Activated CD4-positive, alpha-beta T cell treated with anti-CD3 and anti-CD28 coated beads for 36 hours (primary cell): ENCODE measurements at regions of chr2 and their contacts with region 1.

Region 1: GRCh38 chr2:61176755-61177726 is 15.1 kb downstream of the C2orf74 start:
- DNase-seq: peak; percentile 97
- ATAC-seq: peak; percentile 90
- H3K4me3 Mint-ChIP-seq: peak overlapping the region; percentile 86
- H3K27ac Mint-ChIP-seq: peak overlapping the region; percentile 76
- H3K4me1 Mint-ChIP-seq: peaks cover 46% of the 10 kb centered on the region
- H3K27me3 Mint-ChIP-seq: no peaks in the 10 kb centered on the region

Region 2: GRCh38 chr2:60756191-60757041 is 420.6 kb before region 1 on chr2 and contains the start of gene PAPOLG:
- CTCF ChIA-PET with region 1: no interaction called
- POLR2A ChIA-PET with region 1: no interaction called
- intact Hi-C with region 1: loop called in 1 of 2 experiments (anchors 1 kb)
- DNase-seq: peak; percentile 99
- ATAC-seq: peak; percentile 98
- H3K4me3 Mint-ChIP-seq: peak within 1 kb of the TSS; percentile 99
- H3K27ac Mint-ChIP-seq: peak within 1 kb of the TSS; percentile 100
- H3K4me1 Mint-ChIP-seq: peaks cover 34% of the 10 kb centered on the region
- H3K27me3 Mint-ChIP-seq: no peaks in the 10 kb centered on the region
- total RNA-seq, gene PAPOLG: 13.8 to 14.2 TPM

Region 3: DNA sequence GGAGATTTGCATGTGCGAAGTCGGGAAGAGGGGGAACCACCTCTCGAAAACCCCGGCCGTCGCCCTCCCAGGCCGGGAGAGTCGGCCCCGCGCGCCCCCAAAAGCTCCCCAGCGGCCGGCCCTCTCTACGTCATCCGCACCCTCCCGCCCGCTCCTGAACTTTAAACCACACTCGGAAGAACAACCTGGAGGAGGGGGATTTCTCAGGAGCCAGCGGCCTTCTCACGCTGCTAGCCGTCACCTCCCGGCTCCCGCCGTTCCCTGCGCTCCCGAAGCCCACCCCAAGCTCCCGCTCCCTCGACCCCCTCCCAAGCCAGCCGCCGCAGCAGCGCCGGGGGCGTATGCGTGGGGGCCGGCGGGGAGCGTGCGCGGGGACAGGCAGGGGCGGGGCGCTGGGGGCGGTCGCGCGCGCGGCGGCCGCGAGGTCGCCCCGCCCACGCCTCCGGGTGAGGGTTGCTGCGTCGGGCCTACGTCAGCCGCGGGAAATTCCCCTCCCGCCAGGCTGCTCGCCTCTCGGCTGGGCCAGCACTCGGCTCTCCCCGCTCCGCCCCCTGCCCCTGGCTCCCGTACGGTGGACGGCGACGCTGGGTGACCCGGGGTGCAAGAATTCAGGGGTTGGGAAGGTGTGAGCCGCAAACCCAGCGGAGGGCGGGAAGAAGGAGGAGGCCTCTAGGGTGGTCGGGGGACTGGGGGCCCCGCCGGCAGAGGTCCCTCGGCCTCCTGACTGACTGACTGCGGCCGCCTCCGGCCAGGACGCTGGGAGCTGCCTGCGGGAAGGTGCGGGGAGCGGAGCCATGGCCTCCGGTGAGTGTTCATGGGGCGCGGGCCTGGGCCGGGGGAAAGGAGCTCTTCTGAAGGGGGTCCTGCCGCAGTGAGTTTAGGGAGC is 295.8 kb before region 1 on chr2 and contains the start of gene REL:
- CTCF ChIA-PET with region 1: no interaction called
- POLR2A ChIA-PET with region 1: no interaction called
- intact Hi-C with region 1: loop called (anchors 1 kb)
- DNase-seq: peak; percentile 95
- ATAC-seq: peak; percentile 84
- H3K4me3 Mint-ChIP-seq: peak within 1 kb of the TSS; percentile 91
- H3K27ac Mint-ChIP-seq: peak within 1 kb of the TSS; percentile 98
- H3K4me1 Mint-ChIP-seq: peaks cover 25% of the 10 kb centered on the region
- H3K27me3 Mint-ChIP-seq: no peaks in the 10 kb centered on the region
- total RNA-seq, gene REL: 42.7 to 55.9 TPM

Region 4: GRCh38 chr2:61065715-61066709 is 111.0 kb before region 1 on chr2 and contains the start of gene SANBR:
- CTCF ChIA-PET with region 1: interaction called, 3 read pairs
- POLR2A ChIA-PET with region 1: no interaction called
- intact Hi-C with region 1: loop called (anchors 1 to 5 kb)
- DNase-seq: peak; percentile 90
- ATAC-seq: peak; percentile 99
- H3K4me3 Mint-ChIP-seq: peak within 1 kb of the TSS; percentile 80
- H3K27ac Mint-ChIP-seq: peak within 1 kb of the TSS; percentile 78
- H3K4me1 Mint-ChIP-seq: peaks cover 12% of the 10 kb centered on the region
- H3K27me3 Mint-ChIP-seq: no peaks in the 10 kb centered on the region
- total RNA-seq, gene SANBR: 2.5 to 3.0 TPM

Region 5: GRCh38 chr2:61470965-61471904 is 294.2 kb after region 1 on chr2 and contains the start of gene USP34:
- CTCF ChIA-PET with region 1: no interaction called
- POLR2A ChIA-PET with region 1: no interaction called
- intact Hi-C with region 1: loop called in 1 of 2 experiments (anchors 1 kb)
- DNase-seq: peak; percentile 97
- ATAC-seq: peak; percentile 91
- H3K4me3 Mint-ChIP-seq: peak within 1 kb of the TSS; percentile 83
- H3K27ac Mint-ChIP-seq: peak within 1 kb of the TSS; percentile 94
- H3K4me1 Mint-ChIP-seq: peaks cover 29% of the 10 kb centered on the region
- H3K27me3 Mint-ChIP-seq: no peaks in the 10 kb centered on the region
- total RNA-seq, gene USP34: 63.7 to 67.6 TPM

Region 6: DNA sequence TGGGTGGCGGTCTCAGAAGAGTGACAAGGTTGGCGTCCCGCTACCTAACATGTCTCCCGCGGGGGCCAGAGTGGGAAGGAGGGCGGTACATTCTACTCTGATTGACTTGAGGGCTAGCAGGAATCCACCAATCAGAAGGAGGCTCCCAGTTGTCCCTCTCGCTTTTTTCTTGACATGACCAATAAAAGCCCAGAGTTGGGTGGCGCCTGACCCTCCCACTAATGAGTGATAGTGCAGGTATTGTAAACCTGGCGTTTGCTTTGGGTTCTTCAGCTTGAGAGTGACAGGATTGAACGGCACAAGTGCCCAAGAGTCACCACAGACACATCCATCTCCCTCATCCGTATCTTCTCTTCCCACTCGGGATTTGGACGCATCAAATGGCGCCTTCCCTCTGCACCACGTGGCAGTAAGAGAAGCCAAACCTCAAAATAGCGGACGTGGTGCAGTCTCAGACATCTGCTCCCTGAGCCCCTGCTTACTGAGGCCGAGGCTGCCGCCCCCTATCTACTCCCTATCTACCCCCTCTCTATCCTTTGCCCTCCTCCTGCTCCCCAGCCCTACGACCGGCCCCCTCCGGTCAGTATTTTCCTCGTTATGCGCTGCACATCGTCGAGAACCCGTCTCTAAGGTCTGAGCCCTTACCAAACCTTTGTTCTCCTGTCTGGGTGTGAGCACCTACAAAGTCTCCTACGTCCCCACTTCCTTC is 677.6 kb after region 1 on chr2:
- CTCF ChIA-PET with region 1: no interaction called
- POLR2A ChIA-PET with region 1: no interaction called
- intact Hi-C with region 1: loop called in 1 of 2 experiments (anchors 1 kb)
- DNase-seq: peak; percentile 93
- ATAC-seq: peak; percentile 94
- H3K4me3 Mint-ChIP-seq: peak overlapping the region; percentile 99
- H3K27ac Mint-ChIP-seq: peak overlapping the region; percentile 94
- H3K4me1 Mint-ChIP-seq: peaks cover 20% of the 10 kb centered on the region
- H3K27me3 Mint-ChIP-seq: no peaks in the 10 kb centered on the region

Region 7: DNA sequence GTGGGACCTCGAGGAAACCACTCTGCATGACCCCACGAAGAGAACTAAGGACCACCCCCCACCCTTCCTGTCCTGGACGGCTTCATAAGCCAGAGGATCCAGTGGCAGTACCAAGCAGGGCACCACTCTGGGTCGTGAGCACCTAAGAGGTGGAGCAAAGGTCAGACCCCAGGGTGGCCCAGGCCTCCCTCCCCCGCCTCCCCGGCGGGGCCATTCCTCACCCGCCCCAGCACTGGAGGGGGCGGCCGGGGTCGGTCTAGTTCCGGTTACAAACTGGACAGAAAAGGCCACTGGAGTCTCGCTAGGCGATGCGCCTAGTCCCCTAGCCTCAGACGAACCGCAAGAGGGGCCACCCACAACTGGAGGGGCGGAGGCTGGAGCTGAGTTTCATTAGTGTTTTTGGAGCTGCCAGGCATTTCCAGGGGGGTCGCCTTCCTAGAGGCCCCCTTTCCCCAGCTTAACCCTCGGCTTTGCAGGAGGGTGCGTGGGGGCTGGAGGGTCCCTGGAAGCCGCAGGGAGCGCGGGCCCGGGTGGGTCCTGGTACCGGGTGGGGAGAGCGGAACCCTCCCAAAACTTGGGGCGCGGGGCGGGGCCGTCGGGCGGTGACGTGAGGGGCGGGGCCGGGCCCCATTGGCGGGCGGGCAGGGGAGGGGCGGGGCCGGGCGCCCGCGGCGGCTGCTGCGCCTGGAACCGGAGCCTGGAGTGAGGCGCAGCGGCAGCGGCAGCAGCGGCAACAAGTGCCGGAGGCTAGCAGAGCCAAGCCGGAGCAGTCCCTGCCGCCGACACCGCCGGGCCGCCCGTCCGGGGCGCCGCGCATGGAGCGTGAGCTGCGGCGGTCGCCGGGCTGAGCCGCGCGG is 1018.6 kb after region 1 on chr2 and contains the start of gene B3GNT2:
- CTCF ChIA-PET with region 1: no interaction called
- POLR2A ChIA-PET with region 1: no interaction called
- intact Hi-C with region 1: loop called in 1 of 2 experiments (anchors 10 kb)
- DNase-seq: peak; percentile 92
- ATAC-seq: peak; percentile 62
- H3K4me3 Mint-ChIP-seq: peak within 1 kb of the TSS; percentile 92
- H3K27ac Mint-ChIP-seq: peak within 1 kb of the TSS; percentile 92
- H3K4me1 Mint-ChIP-seq: peaks cover 28% of the 10 kb centered on the region
- H3K27me3 Mint-ChIP-seq: no peaks in the 10 kb centered on the region
- total RNA-seq, gene B3GNT2: 28.6 to 31.7 TPM